Activated CD8-positive, alpha-beta memory T cell treated with anti-CD3 and anti-CD28 coated beads, Interleukin-2, amount 10 ng/mL, durations not matched to agents 7 days and 5 days (primary cell): ENCODE measurements at regions of chr11 and their contacts with region 1.

Region 1: DNA sequence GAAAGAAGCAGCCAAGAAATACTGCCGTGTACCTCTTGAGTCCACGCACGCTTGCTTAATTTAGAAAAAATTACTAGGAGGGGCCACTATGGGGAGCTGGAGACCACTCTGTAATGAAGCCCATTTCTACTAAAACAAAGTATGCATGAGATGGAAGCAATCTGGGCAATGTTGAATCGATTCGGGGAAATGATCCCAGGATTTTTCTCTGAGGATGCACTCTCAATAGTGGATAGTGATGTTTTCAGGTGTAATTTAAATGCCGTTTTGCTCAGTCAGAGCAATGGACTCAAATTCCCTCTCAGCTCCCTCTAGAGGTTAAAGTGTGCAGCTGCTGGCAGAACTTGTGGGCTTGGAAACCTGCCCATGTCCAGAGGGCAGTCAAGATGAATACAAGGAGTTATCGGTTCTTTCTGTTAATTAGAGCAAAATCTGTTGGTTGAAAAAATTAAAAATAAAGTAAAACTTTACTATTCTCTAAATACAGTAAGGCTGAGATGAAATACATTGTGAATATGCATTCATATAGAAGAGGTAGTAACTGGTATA is 64.1 kb downstream of the ME3 start:
- DNase-seq: peak; percentile 63
- ATAC-seq: peak; percentile 83
- H3K4me3 Mint-ChIP-seq: no peak overlapping the region
- H3K27ac Mint-ChIP-seq: no peak overlapping the region
- H3K4me1 Mint-ChIP-seq: no peaks in the 10 kb centered on the region
- H3K27me3 Mint-ChIP-seq: peaks cover 28% of the 10 kb centered on the region

Region 2: GRCh38 chr11:86456052-86456939 is 152.0 kb before region 1 on chr11:
- CTCF ChIA-PET with region 1: interaction called, 24 read pairs
- DNase-seq: peak; percentile 86
- ATAC-seq: peak; percentile 83
- H3K4me3 Mint-ChIP-seq: no peak overlapping the region
- H3K27ac Mint-ChIP-seq: no peak overlapping the region
- H3K4me1 Mint-ChIP-seq: peaks cover 11% of the 10 kb centered on the region
- H3K27me3 Mint-ChIP-seq: peaks cover 5% of the 10 kb centered on the region

Region 3: GRCh38 chr11:86523738-86524619 is 84.3 kb before region 1 on chr11:
- CTCF ChIA-PET with region 1: no interaction called
- DNase-seq: no peak
- ATAC-seq: no peak
- H3K4me3 Mint-ChIP-seq: no peak overlapping the region
- H3K27ac Mint-ChIP-seq: no peak overlapping the region
- H3K4me1 Mint-ChIP-seq: no peaks in the 10 kb centered on the region
- H3K27me3 Mint-ChIP-seq: peaks cover 3% of the 10 kb centered on the region

Region 4: DNA sequence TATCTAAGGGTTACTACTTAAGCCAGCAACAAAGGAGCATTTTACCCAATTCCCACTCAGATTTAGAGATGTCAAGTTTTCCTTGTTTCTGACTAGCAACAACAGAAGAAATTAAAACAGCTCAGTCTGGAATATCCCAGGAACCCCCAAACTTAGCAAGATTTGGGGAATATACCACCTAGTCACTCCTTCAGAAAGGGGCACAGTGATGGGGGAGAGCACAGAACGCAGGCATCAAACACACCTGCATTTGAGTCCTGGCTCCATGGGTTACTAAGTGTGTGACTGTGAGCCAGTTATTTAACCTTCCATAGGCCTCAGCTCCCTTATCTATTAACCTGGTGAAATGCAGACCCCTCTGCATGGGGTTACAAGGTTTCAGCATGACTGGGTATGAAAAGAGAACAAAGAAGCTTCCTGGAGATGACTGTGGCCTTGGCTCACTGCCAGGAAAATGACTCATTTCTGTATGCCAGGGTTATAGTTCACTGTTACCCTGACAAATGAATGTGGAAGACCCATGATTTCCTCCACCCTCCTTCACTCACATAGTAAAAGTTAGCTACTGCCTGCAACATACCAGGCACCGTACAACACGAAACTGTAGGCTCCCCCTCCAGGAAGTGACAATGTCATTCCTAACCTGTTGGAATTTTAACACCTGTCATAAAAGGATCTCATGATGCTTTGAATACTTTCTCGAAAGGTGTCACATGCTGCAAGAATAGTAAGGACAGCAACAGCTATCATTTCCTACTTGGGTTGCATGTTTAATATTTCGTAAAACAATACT is 15.5 kb before region 1 on chr11:
- CTCF ChIA-PET with region 1: interaction called, 35 read pairs
- DNase-seq: peak; percentile 95
- ATAC-seq: peak; percentile 96
- H3K4me3 Mint-ChIP-seq: no peak overlapping the region
- H3K27ac Mint-ChIP-seq: peak overlapping the region; percentile 62
- H3K4me1 Mint-ChIP-seq: peaks cover 24% of the 10 kb centered on the region
- H3K27me3 Mint-ChIP-seq: peaks cover 7% of the 10 kb centered on the region

Region 5: GRCh38 chr11:86629045-86629706 is 20.9 kb after region 1 on chr11:
- CTCF ChIA-PET with region 1: interaction called, 13 read pairs
- DNase-seq: no peak
- ATAC-seq: no peak
- H3K4me3 Mint-ChIP-seq: no peak overlapping the region
- H3K27ac Mint-ChIP-seq: no peak overlapping the region
- H3K4me1 Mint-ChIP-seq: peaks cover 14% of the 10 kb centered on the region
- H3K27me3 Mint-ChIP-seq: peaks cover 58% of the 10 kb centered on the region

Region 6: DNA sequence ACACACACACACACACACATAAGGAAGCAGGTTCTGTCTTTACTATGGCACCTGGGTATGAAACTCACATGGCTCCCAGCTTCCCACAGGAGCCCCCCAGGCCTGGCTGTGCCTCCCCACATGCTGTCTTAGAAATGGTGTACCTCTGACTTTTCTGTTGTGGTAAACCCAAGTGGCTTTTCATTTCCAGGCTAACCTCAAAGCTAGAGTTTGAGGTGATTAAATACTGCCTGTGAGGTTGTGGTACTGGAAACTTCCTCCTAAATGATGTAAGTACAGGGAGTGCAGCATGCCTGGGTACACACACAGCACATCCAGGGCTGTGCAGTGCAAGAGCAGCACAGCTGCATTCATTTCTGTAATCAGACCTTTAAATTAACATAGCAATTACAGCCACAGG is 29.7 kb after region 1 on chr11:
- CTCF ChIA-PET with region 1: interaction called, 12 read pairs
- DNase-seq: peak; percentile 61
- ATAC-seq: peak; percentile 86
- H3K4me3 Mint-ChIP-seq: no peak overlapping the region
- H3K27ac Mint-ChIP-seq: no peak overlapping the region
- H3K4me1 Mint-ChIP-seq: peaks cover 25% of the 10 kb centered on the region
- H3K27me3 Mint-ChIP-seq: peaks cover 73% of the 10 kb centered on the region